ENCODE measurements at regions of chr9 and their contacts with region 1.

Region 1: DNA sequence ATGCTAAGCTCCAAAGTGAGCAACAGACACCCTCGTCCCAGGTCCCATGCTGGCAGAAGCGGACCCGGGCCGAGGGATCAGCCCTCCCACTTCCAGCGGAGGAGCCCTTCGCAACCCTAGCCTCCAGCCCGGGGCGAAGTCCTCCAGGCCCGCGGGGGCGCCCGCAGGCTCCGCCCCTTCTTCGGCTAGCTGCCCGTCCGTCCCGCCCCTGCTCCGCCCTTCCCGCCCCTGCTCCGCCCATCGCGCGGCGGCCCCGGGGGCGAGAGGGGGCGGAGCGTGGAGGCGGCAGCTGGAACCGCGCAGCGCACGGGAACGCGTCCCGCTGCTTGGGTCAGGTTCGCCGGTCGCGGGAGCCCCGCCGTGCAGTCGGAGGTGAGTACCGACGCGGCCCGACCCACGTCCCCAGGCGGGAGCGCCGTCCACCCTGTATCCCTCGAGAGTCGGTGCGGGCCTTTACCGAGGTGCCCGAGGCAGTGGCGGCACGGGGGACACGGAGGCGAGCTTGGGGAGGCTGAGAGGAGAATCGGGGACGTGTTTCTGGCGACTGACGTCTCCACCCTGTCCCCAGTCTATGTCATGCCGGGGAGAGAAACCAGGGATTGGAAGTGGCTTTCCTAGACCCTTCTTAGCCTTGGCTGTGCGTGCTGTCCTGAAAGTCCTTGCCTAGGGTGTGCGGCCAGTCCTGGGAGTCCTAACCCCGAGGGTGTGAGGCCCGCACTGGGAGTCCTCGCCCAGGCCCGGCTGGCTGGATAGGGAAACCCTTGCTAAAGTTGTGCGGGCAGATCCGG is at the start of gene ACO1:
- DNase-seq: peak; percentile 97
- CTCF ChIP-seq: no peak

Region 2: DNA sequence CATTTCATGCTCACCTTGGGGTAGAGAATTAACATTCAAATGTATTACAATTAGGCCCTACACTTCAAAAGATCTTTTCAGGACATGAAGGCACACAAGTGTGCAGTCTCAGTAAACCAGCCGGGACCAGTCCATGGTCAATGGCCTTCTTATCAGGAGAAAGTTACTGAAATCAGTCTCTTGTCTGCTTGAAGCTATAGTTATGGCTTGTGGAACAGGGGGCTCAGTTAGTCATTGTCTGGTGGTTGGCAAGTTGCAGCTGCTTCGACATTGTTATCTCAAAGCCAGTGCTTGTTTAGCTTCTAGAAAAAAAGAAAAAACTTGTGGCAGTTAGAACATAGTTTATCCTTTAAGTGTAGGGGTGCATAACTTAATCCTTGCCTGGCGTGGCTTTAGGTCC is 213.2 kb before region 1 on chr9:
- in situ Hi-C with region 1: no loop called
- DNase-seq: no peak
- CTCF ChIP-seq: no peak

Region 3: GRCh38 chr9:32579706-32580331 is 195.3 kb after region 1 on chr9:
- in situ Hi-C with region 1: loop called (anchors 5 kb)
- DNase-seq: peak; percentile 46
- CTCF ChIP-seq: peak; percentile 92

Region 4: GRCh38 chr9:32703635-32704034 is 319.1 kb after region 1 on chr9:
- in situ Hi-C with region 1: loop called (anchors 10 kb)
- DNase-seq: no peak
- CTCF ChIP-seq: no peak

Region 5: GRCh38 chr9:32728181-32728580 is 343.6 kb after region 1 on chr9:
- in situ Hi-C with region 1: no loop called
- DNase-seq: no peak
- CTCF ChIP-seq: no peak

Region 6: GRCh38 chr9:32986971-32987370 is 602.4 kb after region 1 on chr9:
- in situ Hi-C with region 1: loop called (anchors 10 kb)
- DNase-seq: no peak
- CTCF ChIP-seq: no peak

Measured in GM13976 (cell line).